Vagina (tissue), 2 donors: ENCODE measurements at regions of chr4 and their contacts with region 1.

Region 1: GRCh38 chr4:6917461-6918271 is 8.0 kb downstream of the TBC1D14 start:
- DNase-seq: no peak
- H3K4me3 ChIP-seq: no peak overlapping the region
- H3K27ac ChIP-seq: peak overlapping the region; percentile 72
- H3K4me1 ChIP-seq: peaks cover 38% of the 10 kb centered on the region
- H3K27me3 ChIP-seq: no peaks in the 10 kb centered on the region
- CTCF ChIP-seq: peak in 1 of 3 experiments; percentile 43
- POLR2A ChIP-seq: no peak

Region 2: GRCh38 chr4:6668381-6668780 is 249.3 kb before region 1 on chr4:
- intact Hi-C with region 1: no loop called
- DNase-seq: no peak
- H3K4me3 ChIP-seq: no peak overlapping the region
- H3K27ac ChIP-seq: no peak overlapping the region
- H3K4me1 ChIP-seq: peaks cover 23% of the 10 kb centered on the region
- H3K27me3 ChIP-seq: no peaks in the 10 kb centered on the region
- CTCF ChIP-seq: no peak
- POLR2A ChIP-seq: no peak

Region 3: GRCh38 chr4:6991771-6992557 is 74.3 kb after region 1 on chr4:
- intact Hi-C with region 1: loop called (anchors 10 kb)
- DNase-seq: no peak
- H3K4me3 ChIP-seq: peak overlapping the region in 1 of 2 donors; percentile 12
- H3K27ac ChIP-seq: peak overlapping the region; percentile 51
- H3K4me1 ChIP-seq: peaks cover 54% of the 10 kb centered on the region
- H3K27me3 ChIP-seq: no peaks in the 10 kb centered on the region
- CTCF ChIP-seq: no peak
- POLR2A ChIP-seq: no peak